CD8-positive, alpha-beta T cell (primary cell): ENCODE measurements at regions of chr13 and their contacts with region 1.

Region 1: GRCh38 chr13:49495783-49496762 is at the start of gene PHF11:
- DNase-seq: peak; percentile 67 to 94 (median 87)
- ATAC-seq: peak; percentile 80
- H3K4me3 ChIP-seq: peak within 1 kb of the TSS; percentile 68 to 88
- H3K4me3 Mint-ChIP-seq: peak within 1 kb of the TSS; percentile 96
- H3K27ac ChIP-seq: peak within 1 kb of the TSS; percentile 90 to 96
- H3K27ac Mint-ChIP-seq: peak within 1 kb of the TSS; percentile 99
- H3K4me1 ChIP-seq: peaks cover 20% of the 10 kb centered on the region
- H3K4me1 Mint-ChIP-seq: peaks cover 47% of the 10 kb centered on the region
- H3K27me3 ChIP-seq: no peaks in the 10 kb centered on the region
- H3K27me3 Mint-ChIP-seq: no peaks in the 10 kb centered on the region
- CTCF ChIP-seq: no peak
- total RNA-seq, gene PHF11: 93.9 to 98.3 TPM

Region 2: GRCh38 chr13:49517461-49517860 is 21.4 kb after region 1 on chr13:
- CTCF ChIA-PET with region 1: interaction called, 3 read pairs
- POLR2A ChIA-PET with region 1: no interaction called
- intact Hi-C with region 1: loop called in 1 of 2 experiments (anchors 2 kb)
- DNase-seq: peak in 4 of 9 experiments; percentile 17 to 34 (median 23)
- ATAC-seq: no peak
- H3K4me3 ChIP-seq: no peak overlapping the region
- H3K4me3 Mint-ChIP-seq: no peak overlapping the region
- H3K27ac ChIP-seq: no peak overlapping the region
- H3K27ac Mint-ChIP-seq: no peak overlapping the region
- H3K4me1 ChIP-seq: no peaks in the 10 kb centered on the region
- H3K4me1 Mint-ChIP-seq: peaks cover 14% of the 10 kb centered on the region
- H3K27me3 ChIP-seq: no peaks in the 10 kb centered on the region
- H3K27me3 Mint-ChIP-seq: no peaks in the 10 kb centered on the region
- CTCF ChIP-seq: peak; percentile 26

Region 3: GRCh38 chr13:49967456-49967855 is 471.4 kb after region 1 on chr13:
- CTCF ChIA-PET with region 1: no interaction called
- POLR2A ChIA-PET with region 1: no interaction called
- intact Hi-C with region 1: no loop called
- DNase-seq: no peak
- ATAC-seq: no peak
- H3K4me3 ChIP-seq: no peak overlapping the region
- H3K4me3 Mint-ChIP-seq: no peak overlapping the region
- H3K27ac ChIP-seq: no peak overlapping the region
- H3K27ac Mint-ChIP-seq: no peak overlapping the region
- H3K4me1 ChIP-seq: no peaks in the 10 kb centered on the region
- H3K4me1 Mint-ChIP-seq: no peaks in the 10 kb centered on the region
- H3K27me3 ChIP-seq: no peaks in the 10 kb centered on the region
- H3K27me3 Mint-ChIP-seq: no peaks in the 10 kb centered on the region
- CTCF ChIP-seq: no peak